ENCODE measurements at regions of chr11 and their contacts with region 1.

Region 1: GRCh38 chr11:119101759-119102423 is at the start of gene DPAGT1:
- DNase-seq: peak; percentile 87 to 93 (median 88)
- H3K4me3 ChIP-seq: peak within 1 kb of the TSS; percentile 82
- H3K27ac ChIP-seq: peak within 1 kb of the TSS; percentile 76 to 89
- H3K4me1 ChIP-seq: peaks cover 14% of the 10 kb centered on the region
- H3K27me3 ChIP-seq: no peaks in the 10 kb centered on the region
- CTCF ChIP-seq: no peak
- EP300 ChIP-seq: peak; percentile 62
- POLR2A ChIP-seq: no peak
- total RNA-seq, gene DPAGT1: 14.1 to 31.3 (median 24.4) TPM

Region 2: GRCh38 chr11:119084663-119085436 is 17.0 kb before region 1 on chr11 and contains the start of gene HMBS:
- intact Hi-C with region 1: loop called in 1 of 4 experiments (anchors 1 kb)
- DNase-seq: peak; percentile 90 to 94 (median 93)
- H3K4me3 ChIP-seq: peak within 1 kb of the TSS; percentile 83
- H3K27ac ChIP-seq: peak within 1 kb of the TSS; percentile 74 to 79
- H3K4me1 ChIP-seq: peaks cover 7% of the 10 kb centered on the region
- H3K27me3 ChIP-seq: no peaks in the 10 kb centered on the region
- CTCF ChIP-seq: no peak
- EP300 ChIP-seq: peak; percentile 41
- POLR2A ChIP-seq: peak; percentile 38
- total RNA-seq, gene HMBS: 1.1 to 19.4 (median 8.7) TPM

Measured in ovary (tissue), 10 donors.